ENCODE measurements at regions of chr7 and their contacts with region 1.

Region 1: DNA sequence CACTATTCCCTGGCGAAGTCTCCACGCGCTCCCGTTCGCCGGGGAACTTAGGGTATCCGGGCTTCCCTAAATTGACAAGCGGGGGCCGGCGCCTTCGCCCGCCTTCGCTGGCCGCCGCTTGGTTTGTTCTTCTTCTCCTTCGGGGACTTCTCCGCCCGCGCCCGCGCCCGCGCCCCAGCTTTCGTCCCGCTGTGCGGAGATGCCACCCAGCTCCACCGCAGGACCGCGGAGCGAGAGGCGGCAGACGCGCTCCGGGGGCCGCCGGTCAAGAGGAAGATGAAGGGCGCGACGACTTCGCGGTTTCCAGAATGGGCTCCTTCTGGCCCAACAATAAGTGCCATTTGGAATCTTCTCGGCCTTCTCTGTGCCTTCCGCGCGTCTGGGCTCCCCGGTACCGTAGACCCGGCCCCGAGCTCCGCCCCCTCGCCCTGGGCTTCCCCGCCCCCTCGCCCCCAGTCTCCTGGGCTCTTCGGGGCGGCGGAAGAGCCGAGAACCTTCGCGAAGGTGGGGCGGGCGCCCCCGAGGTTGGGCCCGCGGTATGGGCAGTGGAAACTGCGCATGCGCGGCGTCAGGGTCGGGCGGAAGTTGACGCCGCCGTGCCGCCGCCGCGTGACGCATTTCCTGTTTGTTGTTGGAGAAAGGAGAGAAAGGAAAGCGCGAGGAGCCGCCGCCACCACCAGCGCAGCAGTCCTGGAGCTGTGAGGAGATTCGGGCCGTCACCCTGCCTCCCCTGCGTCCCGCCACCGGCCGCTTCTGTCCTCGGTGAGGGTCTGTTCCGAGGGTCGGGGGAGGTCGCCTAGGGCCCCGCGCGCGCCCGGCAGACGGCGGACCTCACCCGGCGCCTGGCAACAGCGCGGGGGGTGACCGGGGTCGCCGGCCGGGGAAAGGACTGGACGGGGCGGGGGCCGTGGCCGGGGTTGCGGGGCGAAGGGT is at the start of gene DNAJB6:
- DNase-seq: peak; percentile 94
- ATAC-seq: peak; percentile 83
- H3K4me3 Mint-ChIP-seq: peak within 1 kb of the TSS; percentile 88
- H3K27ac Mint-ChIP-seq: peak within 1 kb of the TSS; percentile 97
- H3K4me1 Mint-ChIP-seq: peaks cover 50% of the 10 kb centered on the region
- H3K27me3 Mint-ChIP-seq: no peaks in the 10 kb centered on the region; the same call in 1 of the 2 replicates
- CTCF ChIP-seq: no peak
- total RNA-seq, gene DNAJB6: 264 to 288 TPM (median 268 TPM) in 3 replicates

Region 2: DNA sequence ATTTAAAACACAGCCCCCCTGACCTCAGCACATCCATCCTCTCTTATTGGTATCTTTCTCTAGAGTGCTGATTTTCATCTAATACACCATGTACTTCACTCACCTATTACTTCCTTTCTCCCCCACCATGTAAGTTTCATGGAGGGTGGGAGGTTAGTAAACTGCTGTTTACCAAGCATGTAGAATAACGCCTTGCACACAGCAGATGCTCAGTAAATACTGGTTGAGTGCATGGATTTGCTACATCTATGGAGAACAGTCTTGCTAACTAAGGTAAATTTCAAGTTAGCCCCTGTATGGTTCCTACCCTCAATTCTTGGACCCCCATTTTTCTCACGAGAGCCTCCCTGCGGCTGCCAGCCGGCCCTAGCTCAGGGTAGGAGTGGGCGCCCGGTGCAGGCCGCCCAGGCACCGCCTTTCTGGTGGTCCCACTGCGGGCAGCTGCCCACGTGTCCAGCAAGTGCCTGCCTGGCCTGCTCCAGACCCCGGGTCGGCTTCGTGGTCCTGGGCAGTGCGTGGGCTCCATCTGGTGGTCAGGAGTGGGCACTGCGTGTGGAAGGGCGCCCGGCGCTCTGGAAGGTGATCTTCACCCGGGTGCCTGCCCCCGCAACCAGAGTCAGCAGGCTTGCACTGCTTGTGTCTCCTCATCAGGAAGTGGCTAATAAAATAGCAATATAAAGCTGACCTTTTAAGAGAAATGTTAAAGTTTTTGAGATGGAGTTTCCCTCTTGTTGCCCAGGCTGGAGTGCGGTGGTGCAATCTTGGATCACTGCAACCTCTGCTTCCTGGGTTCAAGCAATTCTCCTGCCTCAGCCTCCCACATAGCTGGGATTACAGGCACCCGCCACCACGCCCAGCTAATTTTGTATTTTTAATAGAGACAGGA is 63.2 kb before region 1 on chr7:
- CTCF ChIA-PET with region 1: interaction called, 10 read pairs
- POLR2A ChIA-PET with region 1: interaction called, 3 read pairs
- DNase-seq: peak; percentile 81
- ATAC-seq: peak; percentile 82
- H3K4me3 Mint-ChIP-seq: no peak overlapping the region
- H3K27ac Mint-ChIP-seq: peak overlapping the region; percentile 86; the same call in 1 of the 2 replicates
- H3K4me1 Mint-ChIP-seq: peaks cover 21% of the 10 kb centered on the region
- H3K27me3 Mint-ChIP-seq: no peaks in the 10 kb centered on the region
- CTCF ChIP-seq: peak; percentile 93

Region 3: GRCh38 chr7:157279741-157280215 is 56.9 kb before region 1 on chr7:
- CTCF ChIA-PET with region 1: interaction called, 10 read pairs
- POLR2A ChIA-PET with region 1: interaction called, 10 read pairs
- DNase-seq: no peak
- ATAC-seq: no peak
- H3K4me3 Mint-ChIP-seq: no peak overlapping the region
- H3K27ac Mint-ChIP-seq: no peak overlapping the region
- H3K4me1 Mint-ChIP-seq: peaks cover 15% of the 10 kb centered on the region
- H3K27me3 Mint-ChIP-seq: peaks cover 5% of the 10 kb centered on the region; the same call in 1 of the 2 replicates
- CTCF ChIP-seq: no peak

Region 4: GRCh38 chr7:157320608-157320980 is 16.1 kb before region 1 on chr7:
- CTCF ChIA-PET with region 1: interaction called, 5 read pairs
- POLR2A ChIA-PET with region 1: interaction called, 12 read pairs
- DNase-seq: no peak
- ATAC-seq: no peak
- H3K4me3 Mint-ChIP-seq: peak overlapping the region; percentile 62
- H3K27ac Mint-ChIP-seq: peak overlapping the region; percentile 96
- H3K4me1 Mint-ChIP-seq: peaks cover 38% of the 10 kb centered on the region
- H3K27me3 Mint-ChIP-seq: no peaks in the 10 kb centered on the region
- CTCF ChIP-seq: no peak

Region 5: GRCh38 chr7:157347217-157347904 is 10.7 kb after region 1 on chr7:
- CTCF ChIA-PET with region 1: interaction called, 11 read pairs
- POLR2A ChIA-PET with region 1: interaction called, 4 read pairs
- DNase-seq: no peak
- ATAC-seq: no peak
- H3K4me3 Mint-ChIP-seq: peak overlapping the region; percentile 11; the same call in 1 of the 2 replicates
- H3K27ac Mint-ChIP-seq: peak overlapping the region; percentile 74; the same call in 1 of the 2 replicates
- H3K4me1 Mint-ChIP-seq: peaks cover 85% of the 10 kb centered on the region
- H3K27me3 Mint-ChIP-seq: no peaks in the 10 kb centered on the region; the same call in 1 of the 2 replicates
- CTCF ChIP-seq: no peak

Measured in WTC11 (cell line).